Dendritic cell treated with granulocyte-macrophage colony-stimulating factor and Interleukin-4, amounts not matched to agents 40 ng/mL and 50 ng/mL, for 4 days (primary cell): ENCODE measurements at regions of chr5 and their contacts with region 1.

Region 1: DNA sequence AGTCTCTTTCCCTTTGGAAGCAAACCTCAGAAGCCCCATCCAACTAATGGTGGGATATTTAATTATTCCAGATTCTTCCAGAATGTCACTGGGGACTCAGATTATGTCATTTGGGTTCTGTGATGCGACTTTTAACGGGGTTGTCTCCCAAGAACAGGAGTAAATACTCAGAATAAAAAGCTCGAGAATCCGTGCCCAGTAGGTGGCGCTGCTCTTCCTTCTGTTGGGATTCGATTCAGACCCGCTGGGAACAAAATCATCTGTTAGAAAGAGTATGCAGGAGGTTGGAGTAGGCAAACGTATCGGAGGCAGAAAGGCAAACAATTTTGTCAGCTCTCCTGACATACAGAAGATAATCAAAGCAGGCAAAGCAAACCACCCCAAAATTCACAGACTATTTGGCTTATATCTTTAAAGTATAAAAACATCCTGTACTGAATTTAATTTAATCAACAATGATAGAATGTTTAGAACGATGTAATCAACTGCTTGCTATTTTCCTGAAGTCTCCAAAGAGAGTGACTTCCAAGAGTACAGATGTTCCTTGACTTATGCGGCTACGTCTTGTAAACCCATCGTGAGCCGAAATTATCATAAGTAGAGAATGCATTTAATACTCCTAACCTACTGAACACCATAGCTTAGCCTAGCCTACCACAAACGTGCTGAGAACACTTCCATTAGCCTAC is 169.8 kb upstream of the RAI14 start:
- H3K4me3 Mint-ChIP-seq: no peak overlapping the region
- H3K27ac Mint-ChIP-seq: no peak overlapping the region
- H3K4me1 Mint-ChIP-seq: no peaks in the 10 kb centered on the region
- H3K27me3 Mint-ChIP-seq: peaks cover 13% of the 10 kb centered on the region

Region 2: GRCh38 chr5:34538026-34538672 is 51.8 kb after region 1 on chr5:
- intact Hi-C with region 1: loop called (anchors 2 kb)
- H3K4me3 Mint-ChIP-seq: no peak overlapping the region
- H3K27ac Mint-ChIP-seq: no peak overlapping the region
- H3K4me1 Mint-ChIP-seq: no peaks in the 10 kb centered on the region
- H3K27me3 Mint-ChIP-seq: peaks cover 10% of the 10 kb centered on the region